ENCODE measurements at regions of chr11 and their contacts with region 1.

Region 1: GRCh38 chr11:122863704-122864326 is 18.7 kb upstream of the JHY start:
- DNase-seq: peak; percentile 53
- H3K4me3 Mint-ChIP-seq: no peak overlapping the region
- H3K27ac Mint-ChIP-seq: no peak overlapping the region
- H3K4me1 Mint-ChIP-seq: no peaks in the 10 kb centered on the region
- H3K27me3 Mint-ChIP-seq: peaks cover 32% of the 10 kb centered on the region
- CTCF ChIP-seq: peak; percentile 84

Region 2: DNA sequence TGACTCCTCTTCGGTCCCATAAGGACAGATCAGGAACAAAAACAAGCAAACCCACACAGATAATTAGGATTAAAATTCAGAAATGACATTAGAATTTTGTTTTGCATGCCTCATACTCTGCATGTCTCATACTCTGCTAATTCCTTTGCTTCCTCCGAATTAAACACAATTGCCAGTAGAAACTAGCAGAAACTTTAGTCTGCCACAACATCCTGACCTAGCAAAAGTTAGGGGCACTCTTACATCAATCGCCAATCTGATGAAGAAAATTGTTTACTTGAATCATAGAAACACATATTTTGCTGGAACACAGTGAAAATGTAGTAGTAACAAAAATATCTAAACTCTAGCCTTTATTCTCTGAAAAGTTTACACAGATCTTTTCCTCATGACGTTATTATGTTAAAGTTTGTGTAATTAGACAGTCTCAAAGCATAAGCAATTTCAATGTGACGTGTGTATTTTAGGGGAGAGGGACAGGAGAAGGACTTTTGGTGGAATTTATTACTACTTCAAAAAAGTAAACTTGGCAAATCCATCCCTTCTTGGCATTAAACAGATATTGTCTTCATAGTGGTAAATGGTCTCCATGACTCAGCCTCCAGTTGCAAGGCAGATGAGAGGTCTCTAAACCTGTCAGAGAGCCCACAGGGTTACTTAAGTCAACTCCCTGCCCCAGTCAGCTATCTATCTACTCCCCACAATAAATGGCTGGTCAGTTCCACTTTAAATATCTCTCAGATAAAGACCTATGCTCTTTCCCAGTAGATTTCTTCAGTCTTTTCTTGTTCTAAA is 458.1 kb before region 1 on chr11:
- CTCF ChIA-PET with region 1: no interaction called
- POLR2A ChIA-PET with region 1: no interaction called
- intact Hi-C with region 1: no loop called
- DNase-seq: peak; percentile 24
- H3K4me3 Mint-ChIP-seq: no peak overlapping the region
- H3K27ac Mint-ChIP-seq: no peak overlapping the region
- H3K4me1 Mint-ChIP-seq: peaks cover 16% of the 10 kb centered on the region
- H3K27me3 Mint-ChIP-seq: no peaks in the 10 kb centered on the region
- CTCF ChIP-seq: no peak

Region 3: GRCh38 chr11:122808478-122808869 is 55.3 kb before region 1 on chr11:
- CTCF ChIA-PET with region 1: no interaction called
- POLR2A ChIA-PET with region 1: no interaction called
- intact Hi-C with region 1: no loop called
- DNase-seq: no peak
- H3K4me3 Mint-ChIP-seq: no peak overlapping the region
- H3K27ac Mint-ChIP-seq: peak overlapping the region; percentile 70
- H3K4me1 Mint-ChIP-seq: peaks cover 32% of the 10 kb centered on the region
- H3K27me3 Mint-ChIP-seq: no peaks in the 10 kb centered on the region
- CTCF ChIP-seq: no peak

Region 4: DNA sequence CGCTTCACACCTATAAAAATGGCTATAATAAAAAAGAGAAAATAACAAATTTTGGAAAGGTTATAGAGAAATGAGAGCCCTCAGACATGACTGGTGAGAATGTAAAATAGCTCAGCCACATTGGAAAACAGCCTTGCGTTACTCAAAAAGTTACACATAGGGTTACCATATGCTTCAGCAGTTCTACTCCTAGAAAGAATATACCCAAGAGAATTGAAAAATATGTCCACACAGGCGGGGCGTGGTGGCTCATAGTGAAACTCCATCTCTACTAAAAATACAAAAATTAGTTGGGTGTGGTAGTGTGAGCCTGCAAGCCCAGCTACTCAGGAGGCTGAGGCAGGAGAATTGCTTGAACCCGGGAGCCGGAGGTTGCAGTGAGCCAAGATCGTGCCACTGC is 11.2 kb after region 1 on chr11:
- CTCF ChIA-PET with region 1: interaction called, 11 read pairs
- POLR2A ChIA-PET with region 1: interaction called, 3 read pairs
- intact Hi-C with region 1: no loop called
- DNase-seq: no peak
- H3K4me3 Mint-ChIP-seq: no peak overlapping the region
- H3K27ac Mint-ChIP-seq: no peak overlapping the region
- H3K4me1 Mint-ChIP-seq: no peaks in the 10 kb centered on the region
- H3K27me3 Mint-ChIP-seq: no peaks in the 10 kb centered on the region
- CTCF ChIP-seq: no peak

Region 5: GRCh38 chr11:122882857-122883645 is 19.2 kb after region 1 on chr11:
- CTCF ChIA-PET with region 1: interaction called, 13 read pairs
- POLR2A ChIA-PET with region 1: interaction called, 4 read pairs
- intact Hi-C with region 1: no loop called
- DNase-seq: peak; percentile 53
- H3K4me3 Mint-ChIP-seq: peak overlapping the region; percentile 72
- H3K27ac Mint-ChIP-seq: peak overlapping the region; percentile 92
- H3K4me1 Mint-ChIP-seq: peaks cover 7% of the 10 kb centered on the region
- H3K27me3 Mint-ChIP-seq: no peaks in the 10 kb centered on the region
- CTCF ChIP-seq: no peak

Region 6: DNA sequence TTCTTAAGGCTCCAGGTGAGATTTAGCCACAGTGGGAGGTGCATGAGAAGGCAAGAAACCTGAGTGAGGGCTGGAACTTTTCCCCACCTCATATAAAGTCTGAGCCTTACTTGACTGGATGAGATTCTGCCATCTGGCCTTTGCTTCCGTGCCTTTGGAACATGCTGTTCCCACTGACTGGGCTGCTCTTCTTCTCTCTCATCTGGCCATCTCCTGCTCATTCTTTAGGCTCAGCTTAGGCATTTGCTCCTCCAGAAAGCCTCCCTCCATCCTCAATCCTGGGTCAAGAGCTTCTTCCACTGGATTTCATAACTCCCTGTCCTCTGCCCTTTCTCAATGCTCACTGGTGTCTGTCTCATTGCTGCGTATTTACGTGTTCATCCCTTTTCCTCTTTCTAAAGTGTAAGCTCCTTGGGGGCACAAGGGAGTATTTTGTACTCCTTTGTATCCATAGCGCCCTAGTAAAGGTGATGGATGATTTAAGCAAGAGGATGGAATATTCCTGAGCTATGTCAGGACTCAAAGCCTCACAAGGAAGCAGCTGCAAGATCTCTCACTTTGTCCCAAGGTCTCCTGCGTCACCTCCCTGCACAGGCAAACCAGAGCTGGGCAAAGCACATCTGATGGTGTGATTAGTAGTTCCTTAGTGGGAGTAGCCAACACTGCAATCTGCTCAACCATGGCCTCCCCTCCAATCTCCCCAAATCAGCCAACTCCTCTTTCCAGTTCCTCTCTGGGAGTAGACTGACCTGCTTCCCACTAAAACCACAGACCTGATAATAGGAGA is 182.9 kb after region 1 on chr11:
- CTCF ChIA-PET with region 1: interaction called, 10 read pairs
- POLR2A ChIA-PET with region 1: no interaction called
- intact Hi-C with region 1: no loop called
- DNase-seq: no peak
- H3K4me3 Mint-ChIP-seq: no peak overlapping the region
- H3K27ac Mint-ChIP-seq: no peak overlapping the region
- H3K4me1 Mint-ChIP-seq: peaks cover 5% of the 10 kb centered on the region
- H3K27me3 Mint-ChIP-seq: no peaks in the 10 kb centered on the region
- CTCF ChIP-seq: no peak

Region 7: DNA sequence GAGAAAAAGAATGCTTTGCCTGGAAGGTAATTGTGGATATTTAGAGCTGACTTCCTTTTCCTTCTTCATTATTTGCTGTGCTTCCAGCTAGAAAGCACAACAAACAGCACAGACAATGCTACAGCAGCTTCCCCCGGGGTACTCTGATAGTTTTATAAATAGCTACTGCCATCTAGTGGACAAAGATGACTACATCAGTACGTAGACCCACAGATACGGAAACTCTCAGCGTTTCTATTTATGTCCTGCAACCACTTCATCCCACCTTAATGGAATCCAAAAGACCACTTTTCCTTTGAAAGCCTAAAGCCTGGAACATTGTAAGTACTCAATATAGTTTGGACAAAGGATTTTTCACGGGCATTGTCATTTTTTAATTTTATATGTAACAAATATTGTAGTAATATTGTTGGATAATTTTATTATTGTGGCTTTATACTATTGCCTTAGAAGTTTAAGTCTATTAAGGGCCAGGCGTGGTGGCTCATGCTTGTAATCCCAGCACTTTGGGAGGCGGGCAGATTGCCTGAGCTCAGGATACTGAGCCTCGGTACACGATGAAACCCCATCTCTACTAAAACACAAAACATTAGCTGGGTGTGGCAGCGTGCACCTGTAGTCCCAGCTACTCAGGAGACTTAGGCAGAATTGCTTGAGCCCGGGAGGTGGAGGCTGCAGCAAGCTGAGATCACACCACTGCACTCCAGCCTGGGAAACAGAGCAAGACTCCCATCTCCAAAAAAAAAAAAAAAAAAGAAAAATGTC is 190.7 kb after region 1 on chr11:
- CTCF ChIA-PET with region 1: interaction called, 104 read pairs
- POLR2A ChIA-PET with region 1: interaction called, 10 read pairs
- intact Hi-C with region 1: loop called (anchors 1 kb)
- DNase-seq: peak; percentile 72
- H3K4me3 Mint-ChIP-seq: no peak overlapping the region
- H3K27ac Mint-ChIP-seq: no peak overlapping the region
- H3K4me1 Mint-ChIP-seq: peaks cover 27% of the 10 kb centered on the region
- H3K27me3 Mint-ChIP-seq: no peaks in the 10 kb centered on the region
- CTCF ChIP-seq: peak; percentile 59

Region 8: GRCh38 chr11:123261345-123262106 is 397.7 kb after region 1 on chr11:
- CTCF ChIA-PET with region 1: no interaction called
- POLR2A ChIA-PET with region 1: no interaction called
- intact Hi-C with region 1: loop called (anchors 10 kb)
- DNase-seq: peak; percentile 80
- H3K4me3 Mint-ChIP-seq: peak overlapping the region; percentile 49
- H3K27ac Mint-ChIP-seq: no peak overlapping the region
- H3K4me1 Mint-ChIP-seq: no peaks in the 10 kb centered on the region
- H3K27me3 Mint-ChIP-seq: peaks cover 25% of the 10 kb centered on the region
- CTCF ChIP-seq: peak; percentile 90